ENCODE measurements at regions of chr16 and their contacts with region 1.

Region 1: DNA sequence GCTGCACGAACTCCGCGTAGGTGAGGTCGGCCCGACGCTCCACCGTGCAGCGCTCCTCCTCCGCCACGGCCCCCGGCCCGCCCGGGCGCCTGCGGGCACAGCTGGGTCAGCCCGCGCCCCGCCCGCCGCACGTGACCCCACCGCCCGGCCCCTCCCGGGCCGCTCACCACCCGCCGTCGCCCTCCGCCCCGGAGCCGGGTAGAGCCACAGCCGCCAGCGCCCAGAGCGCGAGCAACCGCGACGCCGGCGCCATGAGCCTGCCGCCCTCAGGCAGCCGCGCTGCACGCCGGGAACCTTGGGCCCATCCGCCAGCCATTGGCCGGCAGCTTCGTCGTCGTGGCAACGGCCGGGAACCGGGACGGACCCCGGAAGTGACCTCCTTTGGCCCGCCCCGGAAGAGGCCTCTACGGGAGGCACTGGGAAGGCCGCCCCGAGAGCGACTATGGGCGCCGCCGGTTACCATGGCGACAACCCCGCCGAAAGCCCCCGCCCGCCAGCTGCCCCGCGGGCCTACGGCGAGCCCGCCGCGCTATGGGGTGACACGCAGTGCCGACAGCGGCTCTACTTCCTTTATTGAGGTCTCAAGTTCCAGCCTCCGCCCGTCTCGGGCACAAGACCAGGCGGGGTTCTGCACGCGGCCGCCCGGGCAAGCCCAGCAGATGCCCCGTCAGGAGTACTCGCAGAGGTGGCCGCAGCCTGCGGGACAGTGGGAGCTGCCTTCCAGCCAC is at the start of gene JMJD8:
- DNase-seq: no peak
- ATAC-seq: peak; percentile 86
- H3K4me3 ChIP-seq: peak within 1 kb of the TSS; percentile 67
- H3K27ac ChIP-seq: peak within 1 kb of the TSS; percentile 44; the same call in 1 of the 2 replicates
- H3K4me1 ChIP-seq: peaks cover 16% of the 10 kb centered on the region
- H3K27me3 ChIP-seq: no peaks in the 10 kb centered on the region
- CTCF ChIP-seq: no peak
- EP300 ChIP-seq: no peak
- POLR2A ChIP-seq: peak; percentile 92
- RAD21 ChIP-seq: no peak
- polyA plus RNA-seq, gene JMJD8: 1.00 to 3.4 TPM

Region 2: GRCh38 chr16:450385-451134 is 233.7 kb before region 1 on chr16:
- CTCF ChIA-PET with region 1: no interaction called
- POLR2A ChIA-PET with region 1: no interaction called
- RAD21 ChIA-PET with region 1: no interaction called
- SMC1A ChIA-PET with region 1: no interaction called
- in situ Hi-C with region 1: no loop called
- intact Hi-C with region 1: no loop called
- DNase-seq: peak; percentile 17
- ATAC-seq: peak; percentile 56
- H3K4me3 ChIP-seq: no peak overlapping the region
- H3K27ac ChIP-seq: peak overlapping the region; percentile 13; the same call in 1 of the 2 replicates
- H3K4me1 ChIP-seq: peaks cover 10% of the 10 kb centered on the region
- H3K27me3 ChIP-seq: no peaks in the 10 kb centered on the region
- CTCF ChIP-seq: no peak
- EP300 ChIP-seq: no peak
- POLR2A ChIP-seq: no peak
- RAD21 ChIP-seq: no peak

Region 3: GRCh38 chr16:527006-527753 is 157.1 kb before region 1 on chr16 and contains the start of gene CAPN15:
- CTCF ChIA-PET with region 1: no interaction called
- POLR2A ChIA-PET with region 1: no interaction called
- RAD21 ChIA-PET with region 1: no interaction called
- SMC1A ChIA-PET with region 1: no interaction called
- in situ Hi-C with region 1: no loop called
- intact Hi-C with region 1: loop called (anchors 2 kb)
- DNase-seq: peak; percentile 33
- ATAC-seq: peak; percentile 78
- H3K4me3 ChIP-seq: peak within 1 kb of the TSS; percentile 98
- H3K27ac ChIP-seq: peak within 1 kb of the TSS; percentile 91
- H3K4me1 ChIP-seq: peaks cover 29% of the 10 kb centered on the region
- H3K27me3 ChIP-seq: no peaks in the 10 kb centered on the region
- CTCF ChIP-seq: no peak
- EP300 ChIP-seq: no peak
- POLR2A ChIP-seq: peak; percentile 81
- RAD21 ChIP-seq: no peak
- polyA plus RNA-seq, gene CAPN15: 0.40 to 1.1 TPM

Region 4: GRCh38 chr16:720990-721764 is 36.9 kb after region 1 on chr16 and contains the start of gene ANTKMT:
- CTCF ChIA-PET with region 1: no interaction called
- POLR2A ChIA-PET with region 1: interaction called, 3 read pairs
- RAD21 ChIA-PET with region 1: interaction called, 3 read pairs
- SMC1A ChIA-PET with region 1: no interaction called
- in situ Hi-C with region 1: no loop called
- intact Hi-C with region 1: loop called (anchors 2 kb)
- DNase-seq: no peak
- ATAC-seq: peak; percentile 87
- H3K4me3 ChIP-seq: peak within 1 kb of the TSS; percentile 86
- H3K27ac ChIP-seq: peak within 1 kb of the TSS; percentile 87
- H3K4me1 ChIP-seq: peaks cover 16% of the 10 kb centered on the region
- H3K27me3 ChIP-seq: no peaks in the 10 kb centered on the region
- CTCF ChIP-seq: no peak
- EP300 ChIP-seq: no peak
- POLR2A ChIP-seq: no peak
- RAD21 ChIP-seq: no peak
- polyA plus RNA-seq, gene ANTKMT: 0.58 to 3.1 TPM

Measured in GM12878 (cell line).